Naive thymus-derived CD4-positive, alpha-beta T cell (primary cell): ENCODE measurements at regions of chr17 and their contacts with region 1.

Region 1: GRCh38 chr17:2711601-2712299 is at the start of gene CLUH:
- DNase-seq: peak; percentile 92 to 99 (median 96)
- ATAC-seq: peak; percentile 98
- H3K4me3 ChIP-seq: peak within 1 kb of the TSS; percentile 97
- H3K4me3 Mint-ChIP-seq: peak within 1 kb of the TSS; percentile 78 to 91 (median 87)
- H3K27ac ChIP-seq: peak within 1 kb of the TSS; percentile 70
- H3K27ac Mint-ChIP-seq: peak within 1 kb of the TSS; percentile 41 to 89 (median 75)
- H3K4me1 ChIP-seq: peaks cover 22 to 36% of the 10 kb centered on the region in 2 donors
- H3K4me1 Mint-ChIP-seq: peaks cover 33 to 44% (median 36%) of the 10 kb centered on the region in 7 donors
- H3K27me3 ChIP-seq: no peaks in the 10 kb centered on the region
- H3K27me3 Mint-ChIP-seq: no peaks in the 10 kb centered on the region
- total RNA-seq, gene CLUH: 34.6 to 71.1 (median 48.8) TPM

Region 2: GRCh38 chr17:2336215-2336851 is 375.4 kb before region 1 on chr17 and contains the start of gene TSR1:
- CTCF ChIA-PET with region 1: no interaction called
- POLR2A ChIA-PET with region 1: no interaction called
- intact Hi-C with region 1: loop called in 1 of 2 experiments (anchors 2 kb)
- DNase-seq: peak; percentile 78 to 91 (median 89)
- ATAC-seq: peak; percentile 91
- H3K4me3 ChIP-seq: peak within 1 kb of the TSS; percentile 99
- H3K4me3 Mint-ChIP-seq: peak within 1 kb of the TSS; percentile 97 to 99 (median 98)
- H3K27ac ChIP-seq: peak within 1 kb of the TSS; percentile 92
- H3K27ac Mint-ChIP-seq: peak within 1 kb of the TSS; percentile 88 to 98 (median 95)
- H3K4me1 ChIP-seq: peaks cover 10 to 13% of the 10 kb centered on the region in 2 donors
- H3K4me1 Mint-ChIP-seq: peaks cover 8 to 35% (median 28%) of the 10 kb centered on the region in 7 donors
- H3K27me3 ChIP-seq: no peaks in the 10 kb centered on the region
- H3K27me3 Mint-ChIP-seq: no peaks in the 10 kb centered on the region
- total RNA-seq, gene TSR1: 22.9 to 42.8 (median 30.0) TPM

Region 3: DNA sequence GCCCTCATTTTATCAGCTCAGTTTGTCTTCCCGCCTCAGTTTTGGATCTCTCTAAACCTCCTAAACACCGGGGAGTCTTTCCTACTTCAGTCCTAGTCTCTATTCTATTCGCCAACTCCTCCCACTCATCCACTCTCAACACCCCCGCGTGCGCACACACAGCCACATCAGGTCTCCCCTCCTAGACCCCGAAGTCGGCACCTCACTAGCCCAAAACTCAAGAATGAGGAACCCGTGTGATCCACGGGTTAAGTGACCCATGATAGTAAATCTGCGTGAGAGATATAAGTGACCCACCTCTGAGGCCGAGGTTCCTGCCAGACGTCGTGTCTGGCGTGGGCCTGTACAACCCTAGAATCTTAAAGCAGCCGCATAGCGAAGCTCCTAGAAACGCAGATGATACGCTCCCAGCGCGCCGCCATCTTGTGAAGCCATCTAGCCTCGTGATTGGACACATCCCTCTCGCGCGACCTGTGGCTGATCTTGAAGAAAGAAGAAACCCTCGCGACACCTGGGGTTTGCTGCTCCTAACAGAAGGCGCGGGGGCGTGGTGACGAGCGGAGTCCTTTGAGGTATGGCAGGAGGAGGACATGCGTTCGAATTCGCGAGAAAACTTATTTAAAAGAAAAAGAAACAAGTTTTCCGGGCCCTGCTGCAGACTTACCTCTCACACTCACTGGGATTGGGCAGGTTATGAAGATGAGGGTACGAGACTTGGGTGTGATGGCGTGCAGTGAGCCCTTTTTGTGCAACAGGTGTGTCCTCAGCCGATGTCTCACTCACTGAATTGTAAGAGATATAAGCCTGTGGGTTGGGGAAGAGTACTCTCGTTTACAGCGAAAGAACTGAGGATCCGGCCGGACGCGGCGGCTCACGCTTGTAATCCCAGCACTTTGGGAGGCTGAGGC is 200.0 kb before region 1 on chr17 and contains the start of gene METTL16:
- CTCF ChIA-PET with region 1: no interaction called
- POLR2A ChIA-PET with region 1: interaction called, 3 read pairs
- intact Hi-C with region 1: loop called (anchors 1 kb)
- DNase-seq: peak; percentile 86 to 99 (median 95)
- ATAC-seq: peak; percentile 99
- H3K4me3 ChIP-seq: peak within 1 kb of the TSS; percentile 74
- H3K4me3 Mint-ChIP-seq: peak within 1 kb of the TSS in 2 of 10 donors; percentile 33 to 55
- H3K27ac ChIP-seq: peak within 1 kb of the TSS; percentile 89
- H3K27ac Mint-ChIP-seq: peak within 1 kb of the TSS in 2 of 9 donors; percentile 32 to 77
- H3K4me1 ChIP-seq: peaks cover 9 to 14% of the 10 kb centered on the region in 2 donors
- H3K4me1 Mint-ChIP-seq: peaks cover 13 to 22% (median 15%) of the 10 kb centered on the region in 7 donors
- H3K27me3 ChIP-seq: no peaks in the 10 kb centered on the region
- H3K27me3 Mint-ChIP-seq: no peaks in the 10 kb centered on the region
- total RNA-seq, gene METTL16: 33.5 to 67.7 (median 52.7) TPM

Region 4: DNA sequence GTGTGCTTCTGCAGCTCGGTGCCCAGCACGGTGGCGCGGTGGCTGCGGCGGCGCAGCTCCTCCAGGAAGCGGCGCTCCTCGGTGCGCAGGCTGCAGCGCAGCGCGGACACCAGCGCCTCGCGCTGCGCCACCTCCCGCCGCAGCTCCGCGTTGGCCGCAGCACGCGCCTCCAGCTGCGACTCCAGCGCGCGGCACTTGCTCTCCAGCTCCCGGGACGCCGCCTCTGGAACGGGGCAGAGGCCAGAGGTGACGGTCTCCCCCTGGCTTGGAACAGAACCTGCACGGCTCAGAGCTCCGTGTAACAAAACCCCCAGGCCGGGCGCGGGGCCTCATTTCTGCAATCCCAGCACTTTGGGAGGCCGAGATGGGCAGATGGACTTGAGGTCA is 13.0 kb after region 1 on chr17:
- CTCF ChIA-PET with region 1: interaction called, 6 read pairs
- POLR2A ChIA-PET with region 1: no interaction called
- intact Hi-C with region 1: loop called in 1 of 2 experiments (anchors 1 kb)
- DNase-seq: peak in 6 of 9 donors; percentile 31 to 53 (median 34)
- ATAC-seq: peak; percentile 82
- H3K4me3 ChIP-seq: no peak overlapping the region
- H3K4me3 Mint-ChIP-seq: peak overlapping the region in 6 of 10 donors; percentile 13 to 78 (median 60)
- H3K27ac ChIP-seq: no peak overlapping the region
- H3K27ac Mint-ChIP-seq: no peak overlapping the region
- H3K4me1 ChIP-seq: peaks cover 0 to 3% of the 10 kb centered on the region in 2 donors
- H3K4me1 Mint-ChIP-seq: peaks cover 0 to 7% (median 7%) of the 10 kb centered on the region in 7 donors
- H3K27me3 ChIP-seq: no peaks in the 10 kb centered on the region
- H3K27me3 Mint-ChIP-seq: peaks cover 4 to 37% (median 11%) of the 10 kb centered on the region in 5 donors

Region 5: DNA sequence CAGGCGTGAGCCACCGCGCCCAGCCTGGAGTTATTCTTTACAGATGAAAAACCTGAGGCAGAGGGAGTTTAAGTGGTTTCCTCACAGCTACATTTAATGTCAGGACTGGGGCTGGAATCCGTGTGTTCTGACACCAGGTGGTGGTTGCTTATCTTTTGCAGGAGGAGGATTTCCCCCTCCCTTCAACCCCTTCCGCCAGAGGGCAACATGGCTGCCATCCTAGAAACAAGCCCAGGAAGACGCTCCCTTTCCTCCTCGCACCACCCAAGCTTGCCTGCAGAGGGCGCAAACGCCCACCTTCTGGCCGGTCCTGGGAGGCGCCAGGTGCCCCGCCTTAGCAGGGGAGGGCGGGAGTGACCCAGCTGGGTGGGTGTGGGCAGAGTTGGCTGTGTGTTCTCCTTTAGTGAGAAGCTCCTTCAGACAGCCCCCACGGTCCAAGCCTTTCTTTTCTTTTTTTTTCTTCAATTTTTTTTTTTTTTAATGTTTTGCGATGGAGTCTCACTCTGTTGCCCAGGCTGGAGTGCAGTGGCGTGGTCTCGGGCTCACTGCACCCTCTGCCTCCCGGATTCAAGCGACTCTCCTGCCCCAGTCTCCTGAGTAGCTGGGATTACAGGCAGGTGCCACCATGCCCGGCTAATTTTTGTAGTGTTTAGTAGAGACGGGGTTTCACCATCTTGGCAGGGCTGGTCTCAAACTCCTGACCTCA is 74.6 kb after region 1 on chr17:
- CTCF ChIA-PET with region 1: interaction called, 4 read pairs
- POLR2A ChIA-PET with region 1: interaction called, 3 read pairs
- intact Hi-C with region 1: loop called in 1 of 2 experiments (anchors 5 kb)
- DNase-seq: peak; percentile 79 to 93 (median 87)
- ATAC-seq: peak; percentile 99
- H3K4me3 ChIP-seq: no peak overlapping the region
- H3K4me3 Mint-ChIP-seq: peak overlapping the region in 7 of 10 donors; percentile 21 to 53 (median 42)
- H3K27ac ChIP-seq: no peak overlapping the region
- H3K27ac Mint-ChIP-seq: peak overlapping the region in 2 of 9 donors; percentile 10 to 52
- H3K4me1 ChIP-seq: peaks cover 3 to 23% of the 10 kb centered on the region in 2 donors
- H3K4me1 Mint-ChIP-seq: peaks cover 3 to 16% (median 10%) of the 10 kb centered on the region in 7 donors
- H3K27me3 ChIP-seq: no peaks in the 10 kb centered on the region
- H3K27me3 Mint-ChIP-seq: peaks cover 0 to 23% (median 0%) of the 10 kb centered on the region in 5 donors

Region 6: GRCh38 chr17:2904152-2904551 is 192.4 kb after region 1 on chr17:
- CTCF ChIA-PET with region 1: no interaction called
- POLR2A ChIA-PET with region 1: no interaction called
- intact Hi-C with region 1: no loop called
- DNase-seq: no peak
- ATAC-seq: no peak
- H3K4me3 ChIP-seq: no peak overlapping the region
- H3K4me3 Mint-ChIP-seq: no peak overlapping the region
- H3K27ac ChIP-seq: no peak overlapping the region
- H3K27ac Mint-ChIP-seq: no peak overlapping the region
- H3K4me1 ChIP-seq: no peaks in the 10 kb centered on the region
- H3K4me1 Mint-ChIP-seq: peaks cover 0 to 32% (median under 1%) of the 10 kb centered on the region in 7 donors
- H3K27me3 ChIP-seq: no peaks in the 10 kb centered on the region
- H3K27me3 Mint-ChIP-seq: no peaks in the 10 kb centered on the region

Region 7: GRCh38 chr17:3636154-3636907 is 924.6 kb after region 1 on chr17 and contains the starts of genes CTNS and SHPK:
- CTCF ChIA-PET with region 1: no interaction called
- POLR2A ChIA-PET with region 1: no interaction called
- intact Hi-C with region 1: loop called in 1 of 2 experiments (anchors 2 kb)
- DNase-seq: peak; percentile 90 to 95 (median 95)
- ATAC-seq: peak; percentile 98
- H3K4me3 ChIP-seq: peak within 1 kb of the TSS; percentile 97
- H3K4me3 Mint-ChIP-seq: peak within 1 kb of the TSS; percentile 86 to 99 (median 98)
- H3K27ac ChIP-seq: peak within 1 kb of the TSS; percentile 98
- H3K27ac Mint-ChIP-seq: peak within 1 kb of the TSS; percentile 96 to 100 (median 99)
- H3K4me1 ChIP-seq: peaks cover 0 to 3% of the 10 kb centered on the region in 2 donors
- H3K4me1 Mint-ChIP-seq: peaks cover 17 to 45% (median 29%) of the 10 kb centered on the region in 7 donors
- H3K27me3 ChIP-seq: no peaks in the 10 kb centered on the region
- H3K27me3 Mint-ChIP-seq: no peaks in the 10 kb centered on the region
- total RNA-seq, gene CTNS: 4.7 to 15.2 (median 8.8) TPM
- total RNA-seq, gene SHPK: 6.3 to 11.2 (median 10.8) TPM

Region 8: GRCh38 chr17:3723556-3724369 is 1012.0 kb after region 1 on chr17 and contains the start of gene HASPIN:
- CTCF ChIA-PET with region 1: no interaction called
- POLR2A ChIA-PET with region 1: no interaction called
- intact Hi-C with region 1: loop called in 1 of 2 experiments (anchors 2 kb)
- DNase-seq: peak; percentile 85 to 97 (median 92)
- ATAC-seq: peak; percentile 92
- H3K4me3 ChIP-seq: peak within 1 kb of the TSS; percentile 77
- H3K4me3 Mint-ChIP-seq: peak within 1 kb of the TSS; percentile 84 to 95 (median 92)
- H3K27ac ChIP-seq: peak within 1 kb of the TSS; percentile 83
- H3K27ac Mint-ChIP-seq: peak within 1 kb of the TSS; percentile 65 to 94 (median 86)
- H3K4me1 ChIP-seq: peaks cover 7 to 24% of the 10 kb centered on the region in 2 donors
- H3K4me1 Mint-ChIP-seq: peaks cover 21 to 55% (median 39%) of the 10 kb centered on the region in 7 donors
- H3K27me3 ChIP-seq: no peaks in the 10 kb centered on the region
- H3K27me3 Mint-ChIP-seq: no peaks in the 10 kb centered on the region
- total RNA-seq, gene HASPIN: 0.32 to 18.5 (median 0.35) TPM